GM10248 (cell line): ENCODE measurements at regions of chr2 and their contacts with region 1.

Region 1: DNA sequence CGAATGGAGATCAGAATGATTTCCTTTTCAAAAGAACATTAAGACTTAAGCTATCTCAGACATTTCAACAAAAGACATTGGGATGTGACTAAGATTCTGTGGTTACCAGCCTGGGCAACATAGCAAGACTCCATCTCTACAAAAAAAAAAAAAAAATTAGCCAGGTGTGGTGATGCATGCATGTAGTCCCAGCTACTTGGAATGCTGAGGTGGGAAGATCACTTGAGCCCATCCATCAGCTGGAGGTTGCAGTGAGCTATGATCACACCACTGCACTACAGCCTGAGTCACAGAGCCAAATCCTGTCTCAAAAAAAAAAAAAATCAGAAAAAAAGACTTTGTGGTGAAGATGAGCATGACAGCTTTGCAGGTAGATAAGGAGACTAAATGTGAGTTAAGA is 12.8 kb downstream of the RNF103 start:
- DNase-seq: no peak
- CTCF ChIP-seq: no peak

Region 2: GRCh38 chr2:86598966-86599365 is 11.9 kb before region 1 on chr2:
- CTCF ChIA-PET with region 1: interaction called, 3 read pairs
- POLR2A ChIA-PET with region 1: interaction called, 10 read pairs
- DNase-seq: no peak
- CTCF ChIP-seq: no peak

Region 3: DNA sequence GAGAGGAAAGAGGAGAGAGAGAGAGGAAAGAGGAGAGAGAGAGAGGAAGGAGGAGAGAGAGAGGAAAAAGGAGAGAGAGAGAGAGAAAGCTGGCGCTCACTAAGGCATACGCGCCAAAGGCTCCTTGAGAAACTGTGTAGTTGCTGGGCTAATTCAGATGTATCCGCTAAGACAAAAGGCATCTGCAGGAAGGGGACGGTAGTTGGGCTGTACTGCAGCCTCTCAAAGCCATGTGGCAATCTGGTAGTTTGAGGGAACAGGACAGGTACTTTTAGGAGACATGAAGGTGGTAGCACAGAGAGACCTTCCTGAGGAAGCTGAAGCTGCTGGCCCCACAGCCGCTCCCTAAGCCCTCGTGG is 1590.9 kb after region 1 on chr2:
- CTCF ChIA-PET with region 1: no interaction called
- POLR2A ChIA-PET with region 1: interaction called, 11 read pairs
- DNase-seq: no peak
- CTCF ChIP-seq: no peak